ENCODE measurements at regions of chr1 and their contacts with region 1.

Region 1: DNA sequence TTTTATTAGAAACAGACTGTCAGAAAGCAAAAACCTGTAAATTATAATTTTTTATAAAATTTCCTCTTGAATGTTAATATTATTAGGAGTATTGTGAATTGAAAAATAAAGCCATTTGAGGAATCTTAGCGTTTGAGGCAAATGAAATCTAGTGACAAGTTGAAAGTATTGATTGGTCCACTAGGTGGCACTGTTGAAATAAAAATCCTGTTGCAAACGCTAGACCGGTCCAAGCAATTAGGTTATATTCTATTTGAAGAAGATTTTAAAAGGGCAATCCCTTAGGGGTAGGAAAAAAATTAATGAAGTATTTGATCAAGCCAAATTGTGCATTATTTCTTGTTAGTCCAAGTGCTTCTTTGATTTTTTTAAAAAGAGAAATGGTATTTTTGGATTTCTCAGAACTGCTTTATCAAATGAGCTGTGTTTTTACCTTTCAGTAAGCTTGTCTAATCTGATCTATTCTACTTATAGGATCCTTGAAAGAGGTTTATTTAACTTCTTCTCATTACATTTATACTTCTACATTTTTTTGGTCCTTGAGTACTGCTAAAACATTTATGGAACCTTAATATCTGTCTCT is 57.7 kb downstream of the ATG4C start:
- DNase-seq: peak in 9 of 35 experiments; percentile 2 to 74 (median 7)
- ATAC-seq: peak in 1 of 4 experiments; percentile 42
- H3K4me3 ChIP-seq: no peak overlapping the region
- H3K4me3 Mint-ChIP-seq: no peak overlapping the region
- H3K27ac ChIP-seq: no peak overlapping the region
- H3K27ac Mint-ChIP-seq: no peak overlapping the region
- H3K4me1 ChIP-seq: no peaks in the 10 kb centered on the region
- H3K4me1 Mint-ChIP-seq: peaks cover 0 to 1% (median 0%) of the 10 kb centered on the region in 3 donors
- H3K27me3 ChIP-seq: no peaks in the 10 kb centered on the region
- H3K27me3 Mint-ChIP-seq: no peaks in the 10 kb centered on the region

Region 2: DNA sequence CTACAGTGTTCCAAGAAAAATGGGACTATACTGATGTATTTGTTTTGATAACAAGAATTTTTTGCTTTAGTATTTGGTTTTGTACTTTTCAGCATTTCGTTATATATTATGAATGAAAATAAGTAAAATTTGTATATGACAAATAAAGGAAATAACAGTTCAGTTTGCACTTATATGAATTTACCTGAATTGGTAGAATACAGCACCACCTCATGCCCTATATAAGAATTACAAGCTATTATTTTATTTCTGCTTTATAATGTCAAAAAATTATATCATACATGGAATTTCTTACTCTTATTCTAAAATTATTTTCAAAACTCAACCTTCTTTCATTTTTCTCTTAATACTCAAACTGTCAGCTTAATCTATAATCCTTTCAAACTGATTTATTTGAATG is 696.3 kb after region 1 on chr1:
- CTCF ChIA-PET with region 1: interaction called, 6 to 37 read pairs
- POLR2A ChIA-PET with region 1: no interaction called
- DNase-seq: peak in 1 of 35 experiments; percentile 26
- ATAC-seq: no peak
- H3K4me3 ChIP-seq: no peak overlapping the region
- H3K4me3 Mint-ChIP-seq: no peak overlapping the region
- H3K27ac ChIP-seq: no peak overlapping the region
- H3K27ac Mint-ChIP-seq: no peak overlapping the region
- H3K4me1 ChIP-seq: no peaks in the 10 kb centered on the region
- H3K4me1 Mint-ChIP-seq: no peaks in the 10 kb centered on the region
- H3K27me3 ChIP-seq: no peaks in the 10 kb centered on the region
- H3K27me3 Mint-ChIP-seq: no peaks in the 10 kb centered on the region

Measured in T-cell (primary cell).